ENCODE measurements at regions of chr11 and their contacts with region 1.

Region 1: GRCh38 chr11:60615497-60615896 is 83.9 kb upstream of the MS4A8 start:
- DNase-seq: no peak
- ATAC-seq: no peak

Region 2: DNA sequence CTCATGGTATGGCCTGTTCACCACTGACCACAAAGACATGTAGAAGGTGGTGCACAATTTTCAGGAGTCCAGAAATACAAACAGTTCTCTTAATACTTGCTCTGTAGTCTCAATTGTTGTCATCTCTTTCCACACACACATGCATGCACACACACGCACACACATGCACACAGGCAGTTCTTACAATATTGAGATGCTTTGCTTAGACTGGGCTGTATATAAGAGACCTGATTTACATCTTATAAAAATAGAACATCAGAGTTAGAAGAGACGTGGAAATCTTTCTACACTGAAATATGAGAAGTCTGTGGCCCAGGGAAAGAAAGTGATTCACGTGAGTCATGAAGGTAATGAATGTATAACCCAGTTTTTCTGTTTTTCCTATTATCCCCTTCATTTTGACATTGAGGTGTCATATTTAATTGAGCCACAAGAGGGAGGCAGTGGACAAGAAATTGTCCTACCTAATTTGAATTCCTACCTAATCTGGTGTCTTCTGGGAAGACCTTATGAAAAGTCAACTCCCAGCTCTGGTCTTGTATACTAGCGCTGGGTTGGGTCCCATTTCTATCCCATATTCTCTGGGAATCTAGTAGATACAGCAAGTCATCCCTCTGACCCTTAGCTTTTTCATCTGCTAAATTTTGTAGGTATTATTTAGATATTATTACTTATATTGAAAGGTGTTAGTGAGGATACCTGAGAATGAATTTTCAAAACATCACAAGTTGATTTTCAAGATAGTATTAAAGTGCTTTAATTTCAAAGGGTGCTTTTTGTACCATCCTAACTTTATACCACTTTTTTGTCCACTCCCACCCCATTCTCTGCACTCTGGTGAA is 349.9 kb before region 1 on chr11:
- intact Hi-C with region 1: loop called in 1 of 2 experiments (anchors 10 kb)
- DNase-seq: no peak
- ATAC-seq: peak in 1 of 2 donors; percentile 39

Region 3: GRCh38 chr11:60363542-60364510 is 251.7 kb before region 1 on chr11:
- intact Hi-C with region 1: loop called (anchors 5 to 10 kb)
- DNase-seq: no peak
- ATAC-seq: peak; percentile 71 to 78

Region 4: GRCh38 chr11:60775420-60775961 is 160.0 kb after region 1 on chr11:
- intact Hi-C with region 1: no loop called
- DNase-seq: peak; percentile 86
- ATAC-seq: peak; percentile 87 to 89